Natural killer cell (primary cell): ENCODE measurements at regions of chr5 and their contacts with region 1.

Region 1: DNA sequence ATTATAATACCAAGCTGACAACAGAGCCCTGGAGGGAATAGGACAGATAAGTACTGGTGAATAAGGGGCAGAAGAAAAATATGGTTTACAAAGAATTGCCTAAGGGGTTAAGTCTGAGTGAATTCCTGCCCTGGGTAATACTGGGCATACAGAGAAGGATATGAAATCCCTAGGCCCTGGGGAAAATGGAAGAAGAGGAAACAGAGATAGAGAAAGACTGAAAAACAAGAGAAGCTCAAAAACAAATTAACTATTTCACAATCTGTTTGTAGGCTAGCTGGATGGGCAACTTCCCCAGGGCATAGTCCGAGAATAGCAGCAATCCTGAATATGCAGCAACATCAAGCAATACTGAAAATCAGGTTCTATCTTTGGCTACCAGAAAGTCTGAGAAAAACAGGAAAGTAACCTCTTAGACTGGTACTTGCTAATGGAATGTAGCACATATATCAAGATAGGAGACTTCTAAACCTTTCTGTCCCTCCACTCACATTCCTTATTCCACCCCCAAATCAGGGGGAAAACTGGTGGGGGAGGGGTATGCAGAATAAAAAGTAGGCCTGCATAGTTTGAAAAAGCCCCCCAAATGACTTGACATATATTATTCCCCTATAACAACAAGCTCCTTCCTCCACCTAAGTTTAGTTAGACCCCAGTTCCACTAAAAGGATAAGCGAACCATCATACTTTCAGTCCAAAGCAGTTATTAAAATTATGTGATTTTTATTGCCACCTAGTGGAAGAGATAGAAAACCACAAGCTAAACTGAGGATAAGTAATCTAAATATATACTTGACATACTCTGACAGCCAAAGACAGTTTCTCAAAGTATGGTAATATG is 20.6 kb downstream of the SLC38A9 start:
- DNase-seq: peak in 1 of 2 donors; percentile 51
- ATAC-seq: peak in 2 of 3 donors; percentile 48 to 49
- H3K4me3 ChIP-seq: no peak overlapping the region
- H3K4me3 Mint-ChIP-seq: no peak overlapping the region
- H3K27ac ChIP-seq: no peak overlapping the region
- H3K27ac Mint-ChIP-seq: no peak overlapping the region
- H3K4me1 ChIP-seq: no peaks in the 10 kb centered on the region
- H3K4me1 Mint-ChIP-seq: peaks cover 0 to 5% of the 10 kb centered on the region in 2 donors
- H3K27me3 ChIP-seq: no peaks in the 10 kb centered on the region
- H3K27me3 Mint-ChIP-seq: no peaks in the 10 kb centered on the region
- CTCF ChIP-seq: peak; percentile 74

Region 2: DNA sequence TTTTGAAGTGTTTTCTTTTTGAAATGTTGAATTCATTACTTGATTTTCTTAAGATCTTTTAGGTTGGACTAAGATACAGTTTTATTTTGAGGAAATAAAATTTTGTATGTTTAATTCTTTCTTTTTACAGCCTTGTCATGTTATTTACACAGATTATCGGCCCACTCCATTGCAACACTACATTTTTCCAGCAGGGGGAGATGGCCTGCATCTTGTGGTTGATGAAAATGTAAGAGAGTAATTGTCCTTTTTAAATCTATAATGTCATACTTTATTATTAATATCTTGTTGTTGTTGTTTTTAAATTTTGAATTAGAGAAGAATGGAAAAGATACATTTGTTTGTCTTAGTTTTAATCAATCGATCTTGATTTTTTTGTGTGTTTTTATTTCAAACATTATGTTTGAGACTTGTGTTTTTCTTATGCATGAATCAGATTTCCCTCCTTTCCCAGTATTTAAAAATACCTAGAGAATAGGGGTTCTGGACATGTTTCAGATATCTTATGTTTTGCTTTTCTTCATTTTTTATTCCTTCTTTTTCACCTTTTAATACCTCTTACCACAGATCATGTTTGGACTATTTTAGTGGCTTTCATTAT is 347.0 kb before region 1 on chr5:
- intact Hi-C with region 1: loop called (anchors 2 kb)
- DNase-seq: peak; percentile 36 to 79
- ATAC-seq: peak; percentile 57 to 68 (median 67)
- H3K4me3 ChIP-seq: no peak overlapping the region
- H3K4me3 Mint-ChIP-seq: no peak overlapping the region
- H3K27ac ChIP-seq: no peak overlapping the region
- H3K27ac Mint-ChIP-seq: peak overlapping the region in 1 of 2 donors; percentile 45
- H3K4me1 ChIP-seq: no peaks in the 10 kb centered on the region
- H3K4me1 Mint-ChIP-seq: peaks cover 0 to 5% of the 10 kb centered on the region in 2 donors
- H3K27me3 ChIP-seq: no peaks in the 10 kb centered on the region
- H3K27me3 Mint-ChIP-seq: no peaks in the 10 kb centered on the region
- CTCF ChIP-seq: peak; percentile 98